ENCODE measurements at regions of chr19 and their contacts with region 1.

Region 1: DNA sequence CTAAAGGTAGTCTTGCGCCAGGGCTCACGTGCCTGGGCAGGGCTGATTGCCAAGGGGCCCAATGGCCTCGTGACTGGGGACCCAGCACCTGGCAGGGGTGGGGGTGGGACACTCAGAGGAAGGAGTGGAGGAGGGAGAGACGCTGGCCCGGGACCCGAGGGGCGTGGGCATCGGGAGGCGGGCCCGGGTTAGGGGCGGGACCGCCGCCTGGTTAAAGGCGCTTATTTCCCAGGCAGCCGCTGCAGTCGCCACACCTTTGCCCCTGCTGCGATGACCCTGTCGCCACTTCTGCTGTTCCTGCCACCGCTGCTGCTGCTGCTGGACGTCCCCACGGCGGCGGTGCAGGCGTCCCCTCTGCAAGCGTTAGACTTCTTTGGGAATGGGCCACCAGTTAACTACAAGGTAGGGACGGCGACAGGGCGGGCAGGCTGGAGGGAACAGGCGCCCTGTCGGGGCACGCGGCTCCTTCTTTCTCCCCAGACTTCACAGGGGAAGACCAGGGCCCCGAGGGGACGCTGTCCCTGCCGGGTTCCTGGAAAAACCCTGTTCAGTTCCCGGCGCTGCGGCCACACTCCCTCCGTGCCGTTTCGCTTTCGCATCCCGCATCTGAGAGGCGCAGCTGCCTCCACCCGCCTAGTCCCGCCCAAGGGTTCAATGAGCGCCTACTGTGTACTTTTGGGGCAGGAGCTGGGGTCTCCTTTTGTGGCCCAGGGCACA is at the start of gene IFI30:
- DNase-seq: peak; percentile 97
- ATAC-seq: peak; percentile 65
- H3K4me3 ChIP-seq: peak within 1 kb of the TSS; percentile 67 to 97 (median 83)
- H3K4me3 Mint-ChIP-seq: peak within 1 kb of the TSS; percentile 94
- H3K27ac ChIP-seq: peak within 1 kb of the TSS; percentile 97 to 99
- H3K27ac Mint-ChIP-seq: peak within 1 kb of the TSS; percentile 98
- H3K4me1 ChIP-seq: peaks cover 72 to 90% of the 10 kb centered on the region in 2 donors
- H3K4me1 Mint-ChIP-seq: peaks cover 84% of the 10 kb centered on the region
- H3K27me3 ChIP-seq: no peaks in the 10 kb centered on the region
- H3K27me3 Mint-ChIP-seq: no peaks in the 10 kb centered on the region
- CTCF ChIP-seq: no peak
- total RNA-seq, gene IFI30: 171 TPM in 2 replicates

Region 2: DNA sequence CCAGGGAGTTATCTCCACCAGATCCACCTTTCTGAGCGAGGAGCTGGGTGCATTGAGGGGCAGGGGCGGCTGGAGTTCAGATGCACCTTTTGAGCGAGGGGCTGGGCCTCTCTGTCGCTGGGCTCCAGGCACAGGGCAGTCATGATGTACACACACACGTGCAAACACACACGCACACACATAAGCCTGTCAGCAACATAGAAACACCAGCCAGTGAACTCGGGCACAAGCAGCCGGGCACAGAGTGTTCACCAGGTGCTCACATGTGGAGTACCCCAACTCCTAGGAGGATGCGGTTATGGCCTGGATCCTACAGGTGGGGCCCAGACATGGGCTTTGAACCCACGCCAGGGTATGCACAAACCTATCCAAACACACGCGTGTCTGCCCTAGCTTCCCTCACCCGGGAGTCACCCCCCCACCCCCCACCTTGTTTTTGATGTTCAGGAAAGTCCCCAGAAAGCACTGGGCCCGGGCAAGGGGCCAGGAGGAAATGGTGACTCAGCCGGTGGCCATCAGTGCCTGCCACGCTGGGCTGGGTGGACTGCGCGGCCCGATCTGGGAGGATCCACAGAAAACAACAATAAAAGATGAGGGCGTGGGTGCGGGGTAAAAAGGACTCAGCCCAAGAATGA is 152.5 kb before region 1 on chr19:
- CTCF ChIA-PET with region 1: no interaction called
- POLR2A ChIA-PET with region 1: no interaction called
- intact Hi-C with region 1: loop called (anchors 5 kb)
- DNase-seq: peak; percentile 84
- ATAC-seq: peak; percentile 22
- H3K4me3 ChIP-seq: peak overlapping the region in 2 of 5 experiments; percentile 18 to 35
- H3K4me3 Mint-ChIP-seq: peak overlapping the region; percentile 79
- H3K27ac ChIP-seq: peak overlapping the region; percentile 95 to 99
- H3K27ac Mint-ChIP-seq: peak overlapping the region; percentile 98
- H3K4me1 ChIP-seq: peaks cover 51 to 64% of the 10 kb centered on the region in 2 donors
- H3K4me1 Mint-ChIP-seq: peaks cover 68% of the 10 kb centered on the region
- H3K27me3 ChIP-seq: no peaks in the 10 kb centered on the region
- H3K27me3 Mint-ChIP-seq: no peaks in the 10 kb centered on the region
- CTCF ChIP-seq: no peak

Region 3: DNA sequence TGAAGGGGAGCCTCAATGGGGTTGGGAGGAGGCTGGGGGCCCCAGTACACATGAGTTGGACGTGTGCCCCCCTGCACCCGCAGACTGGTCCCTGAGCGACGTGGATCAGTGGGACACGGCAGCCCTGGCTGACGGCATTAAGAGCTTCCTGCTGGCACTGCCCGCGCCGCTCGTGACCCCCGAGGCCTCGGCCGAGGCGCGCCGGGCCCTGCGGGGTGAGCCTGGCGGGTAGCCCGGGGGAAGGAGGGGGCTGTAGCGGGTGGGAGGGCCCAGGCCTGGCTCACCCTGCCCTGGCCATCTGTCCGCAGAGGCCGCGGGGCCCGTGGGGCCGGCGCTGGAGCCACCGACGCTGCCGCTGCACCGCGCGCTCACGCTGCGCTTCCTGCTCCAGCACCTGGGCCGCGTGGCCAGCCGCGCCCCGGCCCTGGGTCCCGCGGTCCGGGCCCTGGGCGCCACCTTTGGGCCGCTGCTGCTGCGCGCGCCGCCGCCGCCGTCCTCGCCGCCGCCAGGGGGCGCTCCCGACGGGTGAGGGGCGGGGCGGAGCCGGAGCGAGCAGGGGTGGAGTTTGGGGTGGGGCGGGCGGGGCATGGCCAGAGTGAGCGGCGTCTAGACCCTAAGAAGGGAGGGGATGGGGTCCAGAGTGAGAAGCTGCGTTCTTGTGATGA is 12.6 kb before region 1 on chr19:
- CTCF ChIA-PET with region 1: interaction called, 8 read pairs
- POLR2A ChIA-PET with region 1: interaction called, 3 read pairs
- intact Hi-C with region 1: loop called (anchors 1 kb)
- DNase-seq: peak; percentile 90
- ATAC-seq: peak; percentile 97
- H3K4me3 ChIP-seq: peak overlapping the region in 4 of 5 experiments; percentile 13 to 51 (median 40)
- H3K4me3 Mint-ChIP-seq: peak overlapping the region; percentile 65
- H3K27ac ChIP-seq: no peak overlapping the region
- H3K27ac Mint-ChIP-seq: peak overlapping the region; percentile 76
- H3K4me1 ChIP-seq: peaks cover 13 to 19% of the 10 kb centered on the region in 2 donors
- H3K4me1 Mint-ChIP-seq: peaks cover 12% of the 10 kb centered on the region
- H3K27me3 ChIP-seq: no peaks in the 10 kb centered on the region
- H3K27me3 Mint-ChIP-seq: no peaks in the 10 kb centered on the region
- CTCF ChIP-seq: peak; percentile 70

Region 4: GRCh38 chr19:18304458-18305310 is 131.0 kb after region 1 on chr19:
- CTCF ChIA-PET with region 1: no interaction called
- POLR2A ChIA-PET with region 1: interaction called, 11 read pairs
- intact Hi-C with region 1: no loop called
- DNase-seq: peak; percentile 89
- ATAC-seq: peak; percentile 64
- H3K4me3 ChIP-seq: peak overlapping the region in 4 of 5 experiments; percentile 51 to 60 (median 54)
- H3K4me3 Mint-ChIP-seq: peak overlapping the region; percentile 95
- H3K27ac ChIP-seq: peak overlapping the region; percentile 98 to 99
- H3K27ac Mint-ChIP-seq: peak overlapping the region; percentile 100
- H3K4me1 ChIP-seq: peaks cover 44 to 68% of the 10 kb centered on the region in 2 donors
- H3K4me1 Mint-ChIP-seq: peaks cover 44% of the 10 kb centered on the region
- H3K27me3 ChIP-seq: no peaks in the 10 kb centered on the region
- H3K27me3 Mint-ChIP-seq: no peaks in the 10 kb centered on the region
- CTCF ChIP-seq: no peak